A673 (cell line): ENCODE measurements at regions of chr6 and their contacts with region 1.

Region 1: DNA sequence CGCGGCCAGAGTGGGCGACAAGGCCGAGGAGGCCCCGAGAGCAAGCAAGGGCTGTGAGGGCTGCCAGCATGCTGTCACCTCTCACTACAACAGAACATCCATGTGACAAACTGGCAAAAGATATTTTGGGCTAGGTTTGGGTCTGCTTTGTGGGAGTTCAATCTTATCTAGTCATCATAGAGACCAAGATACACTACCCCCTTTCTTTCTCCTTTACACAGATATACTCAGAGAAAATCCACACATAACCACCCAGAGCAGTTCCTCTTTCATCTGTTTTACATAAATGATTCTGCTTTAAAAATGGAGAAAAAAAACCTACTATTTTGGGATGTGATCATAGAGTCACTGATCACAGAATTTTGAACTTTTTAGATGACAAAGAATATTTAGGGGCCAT is 16.8 kb downstream of the SOX4 start:
- DNase-seq: no peak
- H3K4me3 ChIP-seq: no peak overlapping the region
- H3K27ac ChIP-seq: no peak overlapping the region
- H3K4me1 ChIP-seq: peaks cover 17% of the 10 kb centered on the region
- H3K27me3 ChIP-seq: no peaks in the 10 kb centered on the region
- CTCF ChIP-seq: no peak

Region 2: GRCh38 chr6:21565431-21565830 is 44.9 kb before region 1 on chr6:
- CTCF ChIA-PET with region 1: no interaction called
- POLR2A ChIA-PET with region 1: interaction called, 18 read pairs
- intact Hi-C with region 1: no loop called
- DNase-seq: no peak
- H3K4me3 ChIP-seq: no peak overlapping the region
- H3K27ac ChIP-seq: no peak overlapping the region
- H3K4me1 ChIP-seq: no peaks in the 10 kb centered on the region
- H3K27me3 ChIP-seq: no peaks in the 10 kb centered on the region
- CTCF ChIP-seq: no peak